ENCODE measurements at regions of chr9 and their contacts with region 1.

Region 1: GRCh38 chr9:131478421-131478868 is 24.3 kb upstream of the POMT1 start:
- DNase-seq: peak in 2 of 5 donors; percentile 53 to 77
- ATAC-seq: no peak
- H3K4me3 ChIP-seq: no peak overlapping the region
- H3K27ac ChIP-seq: peak overlapping the region in 3 of 12 donors; percentile 3 to 72 (median 18)
- H3K4me1 ChIP-seq: peaks cover 0 to 52% (median 20%) of the 10 kb centered on the region in 12 donors
- H3K27me3 ChIP-seq: no peaks in the 10 kb centered on the region
- CTCF ChIP-seq: peak; percentile 36 to 66 (median 57)
- POLR2A ChIP-seq: no peak

Region 2: DNA sequence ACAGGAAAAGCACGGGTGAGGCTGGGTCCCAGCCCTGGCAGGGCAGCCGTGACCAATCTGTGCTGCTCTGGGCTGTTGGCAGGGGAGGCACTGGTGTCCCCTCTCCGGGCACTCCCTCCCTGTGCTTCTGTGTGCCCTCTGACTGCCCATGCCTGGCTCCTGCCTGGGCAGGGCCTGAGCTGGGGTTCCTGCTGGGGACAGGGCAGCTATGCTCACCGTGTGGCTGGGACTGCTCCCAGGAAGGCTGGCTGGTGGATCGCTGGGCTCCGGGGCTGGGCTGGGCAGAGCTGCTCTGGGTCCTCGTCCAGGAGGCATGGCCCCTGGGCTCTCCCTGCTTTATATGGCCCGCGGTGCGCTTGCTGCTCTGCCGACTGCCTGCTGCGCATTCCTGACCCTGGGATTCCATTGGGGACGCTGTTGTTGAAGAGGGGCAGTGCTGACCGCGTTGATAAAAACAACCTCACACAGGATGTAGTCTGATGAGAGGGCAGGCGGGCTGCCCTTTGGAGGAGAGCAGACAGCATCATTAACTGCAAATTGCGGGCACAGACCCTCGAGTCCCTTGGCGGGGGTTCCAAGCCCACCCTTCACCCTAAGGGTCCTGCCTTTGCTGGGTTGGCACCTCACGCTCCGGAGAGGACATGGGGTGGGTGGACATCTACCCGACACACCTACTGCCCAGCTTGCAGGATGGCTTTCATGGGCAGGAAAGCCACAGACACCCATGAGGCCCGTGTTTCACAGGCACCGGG is 582.8 kb before region 1 on chr9:
- intact Hi-C with region 1: no loop called
- DNase-seq: no peak
- ATAC-seq: peak; percentile 31 to 63 (median 51)
- H3K4me3 ChIP-seq: no peak overlapping the region
- H3K27ac ChIP-seq: peak overlapping the region in 1 of 12 donors; percentile 66
- H3K4me1 ChIP-seq: peaks cover 0 to 35% (median 17%) of the 10 kb centered on the region in 12 donors
- H3K27me3 ChIP-seq: peaks cover 0 to 8% (median 0%) of the 10 kb centered on the region in 9 donors
- CTCF ChIP-seq: no peak
- POLR2A ChIP-seq: no peak

Region 3: DNA sequence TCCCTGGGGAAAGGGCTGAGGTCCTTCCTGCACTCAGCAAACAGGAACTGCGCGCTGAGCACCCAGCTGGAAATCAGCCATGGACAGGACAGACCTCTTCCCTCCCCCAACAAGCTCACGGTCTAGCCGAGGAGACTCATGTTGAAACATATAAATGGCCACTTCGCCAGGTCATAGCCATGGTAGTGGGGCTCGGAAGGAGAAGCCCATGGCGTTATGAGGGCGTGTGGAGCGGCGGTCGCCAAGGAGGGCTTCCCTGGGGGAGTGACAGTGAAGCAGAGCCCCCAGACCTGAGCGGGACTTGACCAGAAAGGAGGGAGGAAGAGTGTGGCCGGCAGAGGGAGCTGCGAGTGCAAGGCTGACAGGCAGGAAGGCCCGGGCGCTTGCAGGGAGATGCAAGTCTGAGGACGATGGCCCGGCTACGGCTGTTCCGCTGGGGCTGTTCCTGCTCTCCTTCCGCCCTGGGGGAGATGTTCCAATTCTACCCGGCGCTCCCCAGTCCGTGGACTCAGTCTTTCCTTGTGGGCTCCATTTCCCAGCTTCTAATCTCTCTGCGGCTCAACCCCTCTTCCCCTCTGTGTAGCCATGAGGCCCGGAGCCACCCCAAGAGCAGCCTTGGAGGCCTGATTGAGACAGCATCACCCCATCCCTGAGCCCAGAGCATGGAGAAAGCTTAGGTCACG is 128.4 kb before region 1 on chr9:
- intact Hi-C with region 1: loop called in 7 of 10 experiments (anchors 2 to 5 kb)
- DNase-seq: peak; percentile 87 to 96 (median 92)
- ATAC-seq: peak; percentile 87 to 97 (median 96)
- H3K4me3 ChIP-seq: peak overlapping the region in 10 of 12 donors; percentile 8 to 49 (median 33)
- H3K27ac ChIP-seq: peak overlapping the region in 1 of 12 donors; percentile 3
- H3K4me1 ChIP-seq: peaks cover 0 to 16% (median 8%) of the 10 kb centered on the region in 12 donors
- H3K27me3 ChIP-seq: no peaks in the 10 kb centered on the region
- CTCF ChIP-seq: peak; percentile 77 to 95 (median 88)
- POLR2A ChIP-seq: no peak

Region 4: GRCh38 chr9:131366761-131367401 is 111.6 kb before region 1 on chr9:
- intact Hi-C with region 1: loop called in 4 of 10 experiments (anchors 5 kb)
- DNase-seq: peak in 3 of 5 donors; percentile 39 to 55 (median 49)
- ATAC-seq: peak; percentile 72 to 80 (median 78)
- H3K4me3 ChIP-seq: no peak overlapping the region
- H3K27ac ChIP-seq: no peak overlapping the region
- H3K4me1 ChIP-seq: peaks cover 0 to 19% (median 4%) of the 10 kb centered on the region in 12 donors
- H3K27me3 ChIP-seq: no peaks in the 10 kb centered on the region
- CTCF ChIP-seq: peak in 10 of 12 donors; percentile 20 to 59 (median 52)
- POLR2A ChIP-seq: no peak

Region 5: DNA sequence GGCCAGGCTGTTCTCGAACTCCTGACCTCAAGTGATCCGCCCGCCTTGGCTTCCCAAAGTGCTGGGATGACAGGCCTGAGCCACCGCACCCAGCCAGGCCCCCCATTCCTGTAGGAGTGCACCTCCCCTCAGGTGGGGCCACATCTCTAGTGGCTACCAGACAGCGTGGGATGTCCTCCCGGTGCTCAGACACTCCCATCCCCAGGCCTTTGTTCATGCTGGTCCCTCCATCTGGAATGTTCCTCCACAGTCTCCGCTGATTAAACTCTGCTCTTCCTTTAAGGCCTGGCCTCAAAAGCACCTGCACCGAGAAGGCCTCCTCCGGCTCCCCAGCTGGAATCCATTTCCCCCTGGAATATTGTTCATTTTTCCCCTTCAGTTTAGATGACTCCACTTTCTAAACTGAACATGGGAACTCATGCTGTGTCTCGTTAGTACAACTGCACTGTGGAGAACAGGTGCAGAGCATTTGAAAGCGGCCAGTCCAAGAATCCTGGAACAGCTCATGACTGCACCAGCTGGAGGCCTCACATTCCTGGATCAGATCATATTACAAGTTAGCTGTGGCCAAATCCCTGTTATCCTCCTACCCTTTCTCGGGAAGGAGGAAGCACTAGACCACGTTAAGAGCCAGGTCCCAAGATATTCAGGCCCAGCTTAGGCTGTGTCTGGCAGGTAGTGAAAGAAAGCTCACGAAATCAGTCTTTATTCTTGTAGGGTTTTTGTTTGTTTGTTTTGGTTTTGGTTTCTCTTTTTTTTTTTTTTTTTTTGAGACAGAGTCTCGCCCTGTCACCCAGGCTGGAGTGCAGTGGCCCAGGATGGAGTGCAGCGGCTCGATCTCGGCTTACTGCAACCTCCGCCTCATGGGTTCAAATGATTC is 95.4 kb before region 1 on chr9:
- intact Hi-C with region 1: loop called in 2 of 10 experiments (anchors 5 to 10 kb)
- DNase-seq: peak; percentile 54 to 79 (median 69)
- ATAC-seq: peak; percentile 94 to 98 (median 95)
- H3K4me3 ChIP-seq: peak overlapping the region in 2 of 12 donors; percentile 5 to 34
- H3K27ac ChIP-seq: peak overlapping the region; percentile 32 to 82 (median 68)
- H3K4me1 ChIP-seq: peaks cover 0 to 20% (median 11%) of the 10 kb centered on the region in 12 donors
- H3K27me3 ChIP-seq: no peaks in the 10 kb centered on the region
- CTCF ChIP-seq: no peak
- POLR2A ChIP-seq: no peak

Region 6: DNA sequence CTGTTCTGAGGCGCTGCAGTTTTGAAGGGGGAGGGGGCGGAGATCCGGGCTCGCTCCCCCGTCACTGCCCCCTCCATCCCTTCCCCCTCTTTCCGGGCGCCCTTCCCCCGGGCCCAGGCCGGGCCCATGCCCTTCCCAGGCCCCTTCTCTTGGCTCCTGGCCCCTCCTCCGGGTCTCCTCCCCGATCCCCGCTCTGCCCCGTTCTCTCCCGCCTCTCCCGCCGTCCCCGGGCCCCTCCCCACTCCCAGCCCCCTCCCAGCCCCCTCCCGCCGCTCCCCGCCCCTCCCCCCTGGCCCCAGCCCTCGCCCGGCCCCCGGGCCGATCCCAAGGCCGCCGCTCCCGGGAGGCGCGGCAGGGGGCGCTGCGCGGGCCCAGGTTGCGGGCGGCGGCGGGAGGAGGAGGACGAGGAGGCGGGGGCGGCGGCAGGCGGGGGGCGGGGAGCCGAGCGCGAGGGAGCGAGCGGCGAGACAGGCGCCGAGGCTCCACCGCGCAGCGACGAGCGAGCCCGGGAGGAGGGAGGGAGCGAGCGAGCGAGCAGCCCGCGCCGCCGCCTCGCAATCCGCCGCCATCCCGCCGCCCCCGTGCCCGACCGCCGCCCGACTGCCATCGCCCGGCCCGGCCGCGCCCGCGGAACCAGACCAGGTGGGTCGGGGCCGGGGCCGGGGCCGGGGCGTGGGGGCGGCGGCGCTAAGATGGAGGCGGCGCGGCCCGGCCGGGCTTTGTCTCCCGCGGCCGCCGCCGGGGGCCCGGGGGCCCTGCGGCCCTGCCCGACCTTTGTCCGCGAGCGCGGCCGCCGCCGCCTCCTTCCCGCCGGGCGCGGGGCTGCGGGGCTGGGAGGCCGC is 84.6 kb before region 1 on chr9 and contains the start of gene PRRC2B:
- intact Hi-C with region 1: loop called in 7 of 10 experiments (anchors 5 to 10 kb)
- DNase-seq: peak; percentile 87 to 94 (median 91)
- ATAC-seq: peak; percentile 51 to 91 (median 78)
- H3K4me3 ChIP-seq: peak within 1 kb of the TSS; percentile 58 to 96 (median 80)
- H3K27ac ChIP-seq: peak within 1 kb of the TSS; percentile 91 to 99 (median 96)
- H3K4me1 ChIP-seq: peaks cover 8 to 51% (median 41%) of the 10 kb centered on the region in 12 donors
- H3K27me3 ChIP-seq: no peaks in the 10 kb centered on the region
- CTCF ChIP-seq: peak in 11 of 12 donors; percentile 6 to 84 (median 65)
- POLR2A ChIP-seq: peak in 1 of 2 donors; percentile 26
- total RNA-seq, gene PRRC2B: 88.2 to 193 (median 126) TPM

Region 7: DNA sequence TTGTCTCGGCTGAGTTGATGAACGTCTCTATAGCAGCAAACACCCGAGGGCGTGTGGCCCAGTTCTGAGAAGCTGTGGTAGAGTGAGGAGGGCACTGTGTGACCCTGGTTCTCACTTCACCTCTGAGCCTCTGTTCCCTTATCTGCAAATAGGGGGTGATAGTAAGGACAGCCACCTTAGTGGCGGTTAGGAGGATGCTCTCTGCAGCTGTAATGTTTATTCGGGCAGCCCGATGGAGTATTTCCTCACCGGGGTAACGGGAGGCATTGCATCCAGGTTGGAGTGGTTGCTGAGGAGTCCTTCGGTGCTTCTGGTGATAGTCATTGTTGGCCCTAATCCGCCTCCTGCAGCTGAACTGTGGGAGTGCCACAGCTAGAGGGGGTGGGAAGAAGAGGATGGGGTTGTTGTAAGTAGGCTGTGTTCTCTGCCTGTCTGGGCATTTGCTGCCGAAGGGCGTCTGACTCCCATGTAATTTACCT is 70.7 kb before region 1 on chr9:
- intact Hi-C with region 1: loop called in 1 of 10 experiments (anchors 10 kb)
- DNase-seq: peak in 3 of 5 donors; percentile 45 to 71 (median 66)
- ATAC-seq: peak; percentile 57 to 69 (median 62)
- H3K4me3 ChIP-seq: peak overlapping the region in 9 of 12 donors; percentile 6 to 40 (median 21)
- H3K27ac ChIP-seq: peak overlapping the region in 11 of 12 donors; percentile 41 to 89 (median 80)
- H3K4me1 ChIP-seq: peaks cover 31 to 99% (median 93%) of the 10 kb centered on the region in 12 donors
- H3K27me3 ChIP-seq: no peaks in the 10 kb centered on the region
- CTCF ChIP-seq: peak in 11 of 12 donors; percentile 18 to 56 (median 45)
- POLR2A ChIP-seq: no peak